ENCODE measurements at regions of chr7 and their contacts with region 1.

Region 1: GRCh38 chr7:100190048-100190711 is 12.5 kb downstream of the STAG3 start:
- DNase-seq: peak; percentile 19
- H3K4me3 ChIP-seq: no peak overlapping the region
- H3K27ac ChIP-seq: no peak overlapping the region
- H3K4me1 ChIP-seq: no peaks in the 10 kb centered on the region
- H3K27me3 ChIP-seq: no peaks in the 10 kb centered on the region
- CTCF ChIP-seq: peak; percentile 6 to 11

Region 2: DNA sequence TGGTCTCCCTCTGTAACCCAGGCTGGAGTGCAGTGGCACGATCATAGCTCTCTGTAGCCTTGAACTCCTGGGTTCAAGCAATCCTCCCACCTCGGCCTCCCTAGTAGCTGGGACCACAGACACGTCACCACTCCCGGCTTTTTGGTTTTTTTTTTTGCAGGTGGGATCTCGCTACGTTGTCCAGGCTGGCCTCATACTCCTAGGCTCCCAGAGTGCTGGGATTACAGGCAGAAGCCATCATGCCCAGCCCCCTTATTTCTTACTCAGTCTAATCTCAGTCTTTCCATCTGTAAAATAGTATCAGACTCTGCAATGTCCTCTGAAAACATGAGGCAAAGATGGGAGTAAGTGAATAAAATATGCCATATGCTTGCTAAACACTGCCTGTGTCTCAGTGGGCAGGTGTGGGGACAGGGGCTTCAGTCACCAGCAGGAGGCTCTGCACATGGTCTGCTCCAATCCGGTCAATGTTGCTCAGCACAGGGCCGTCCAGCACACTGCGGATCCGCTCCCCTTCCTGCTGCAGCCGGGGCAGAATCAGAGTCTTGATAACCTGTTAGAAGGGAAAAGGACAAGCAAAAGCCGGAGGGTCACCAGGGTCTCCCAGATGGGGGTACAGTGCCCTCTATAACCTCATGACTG is 80.5 kb before region 1 on chr7:
- CTCF ChIA-PET with region 1: no interaction called
- dilution Hi-C with region 1: loop called (anchors 5 kb)
- in situ Hi-C with region 1: no loop called
- intact Hi-C with region 1: no loop called
- DNase-seq: no peak
- H3K4me3 ChIP-seq: no peak overlapping the region
- H3K27ac ChIP-seq: no peak overlapping the region
- H3K4me1 ChIP-seq: no peaks in the 10 kb centered on the region
- H3K27me3 ChIP-seq: no peaks in the 10 kb centered on the region
- CTCF ChIP-seq: peak in 1 of 2 donors; percentile 2

Region 3: DNA sequence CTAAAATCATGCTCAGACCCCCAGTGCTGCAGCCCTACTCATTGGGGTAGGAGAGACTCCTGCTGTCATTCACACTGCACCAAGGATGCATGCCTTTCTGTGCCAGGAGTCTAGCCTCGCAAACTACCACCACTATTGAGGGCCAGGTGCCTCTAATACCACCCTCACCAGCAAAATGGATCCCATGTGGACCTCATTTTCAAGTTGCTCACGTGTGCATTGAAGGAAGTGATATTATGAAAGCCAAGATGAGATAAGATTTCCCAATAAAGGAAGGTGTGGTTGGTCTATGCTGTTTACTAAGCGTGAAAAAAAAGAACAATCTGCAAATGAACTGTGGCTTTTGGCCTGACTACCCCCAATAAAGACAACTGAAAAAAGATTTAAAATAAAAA is 48.6 kb before region 1 on chr7:
- CTCF ChIA-PET with region 1: no interaction called
- dilution Hi-C with region 1: loop called (anchors 5 kb)
- in situ Hi-C with region 1: no loop called
- intact Hi-C with region 1: no loop called
- DNase-seq: no peak
- H3K4me3 ChIP-seq: no peak overlapping the region
- H3K27ac ChIP-seq: no peak overlapping the region
- H3K4me1 ChIP-seq: no peaks in the 10 kb centered on the region
- H3K27me3 ChIP-seq: no peaks in the 10 kb centered on the region
- CTCF ChIP-seq: no peak

Region 4: DNA sequence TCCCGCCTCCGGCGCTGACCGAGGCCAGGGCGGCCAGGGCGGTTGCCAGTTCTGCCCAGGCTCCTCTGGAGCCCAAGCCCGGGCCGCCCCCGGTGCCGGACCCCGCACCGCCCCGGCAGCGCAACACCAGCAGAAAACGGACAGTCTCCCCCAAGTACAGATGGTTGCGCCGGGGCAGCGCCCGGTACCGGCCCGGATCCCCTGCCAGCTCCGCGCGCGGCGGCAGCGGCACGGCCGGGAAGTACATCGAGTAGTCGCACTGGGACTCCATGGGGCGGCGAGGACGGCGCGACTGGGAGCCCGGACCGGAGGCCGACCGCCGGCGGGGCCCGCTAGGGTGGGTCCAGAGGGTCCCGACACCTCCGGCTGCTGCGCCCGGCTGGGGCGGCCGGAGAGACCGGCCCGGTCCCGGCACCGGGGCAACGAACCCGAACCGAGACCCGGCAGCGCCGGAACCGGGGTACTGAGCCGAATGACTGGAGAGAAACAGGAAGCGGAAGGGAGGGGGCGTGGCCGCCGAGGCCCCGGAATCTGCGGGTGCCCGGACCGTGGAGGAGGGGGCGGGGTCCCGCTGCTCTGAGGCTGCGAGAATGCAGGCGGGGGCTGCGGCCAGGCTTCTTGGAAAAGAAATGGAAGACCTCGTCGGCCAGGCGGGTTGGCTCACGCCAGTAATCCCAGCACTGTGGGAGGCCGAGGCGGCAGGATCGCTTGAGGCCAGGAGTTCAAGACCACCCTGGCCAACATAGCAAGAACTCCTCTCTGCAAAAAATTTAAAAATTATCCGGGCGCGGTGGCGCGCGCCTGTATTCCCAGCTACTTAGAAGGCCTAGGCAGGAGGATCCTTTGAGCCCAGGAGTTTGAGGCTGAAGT is 31.7 kb before region 1 on chr7 and contains the start of gene TRAPPC14:
- CTCF ChIA-PET with region 1: interaction called, 10 read pairs
- dilution Hi-C with region 1: no loop called
- in situ Hi-C with region 1: no loop called
- intact Hi-C with region 1: loop called (anchors 2 kb)
- DNase-seq: peak; percentile 65
- H3K4me3 ChIP-seq: peak within 1 kb of the TSS; percentile 66 to 78 (median 73)
- H3K27ac ChIP-seq: peak within 1 kb of the TSS; percentile 54
- H3K4me1 ChIP-seq: peaks cover 19% of the 10 kb centered on the region
- H3K27me3 ChIP-seq: no peaks in the 10 kb centered on the region
- CTCF ChIP-seq: no peak
- total RNA-seq, gene TRAPPC14: 15.3 to 28.5 TPM

Region 5: DNA sequence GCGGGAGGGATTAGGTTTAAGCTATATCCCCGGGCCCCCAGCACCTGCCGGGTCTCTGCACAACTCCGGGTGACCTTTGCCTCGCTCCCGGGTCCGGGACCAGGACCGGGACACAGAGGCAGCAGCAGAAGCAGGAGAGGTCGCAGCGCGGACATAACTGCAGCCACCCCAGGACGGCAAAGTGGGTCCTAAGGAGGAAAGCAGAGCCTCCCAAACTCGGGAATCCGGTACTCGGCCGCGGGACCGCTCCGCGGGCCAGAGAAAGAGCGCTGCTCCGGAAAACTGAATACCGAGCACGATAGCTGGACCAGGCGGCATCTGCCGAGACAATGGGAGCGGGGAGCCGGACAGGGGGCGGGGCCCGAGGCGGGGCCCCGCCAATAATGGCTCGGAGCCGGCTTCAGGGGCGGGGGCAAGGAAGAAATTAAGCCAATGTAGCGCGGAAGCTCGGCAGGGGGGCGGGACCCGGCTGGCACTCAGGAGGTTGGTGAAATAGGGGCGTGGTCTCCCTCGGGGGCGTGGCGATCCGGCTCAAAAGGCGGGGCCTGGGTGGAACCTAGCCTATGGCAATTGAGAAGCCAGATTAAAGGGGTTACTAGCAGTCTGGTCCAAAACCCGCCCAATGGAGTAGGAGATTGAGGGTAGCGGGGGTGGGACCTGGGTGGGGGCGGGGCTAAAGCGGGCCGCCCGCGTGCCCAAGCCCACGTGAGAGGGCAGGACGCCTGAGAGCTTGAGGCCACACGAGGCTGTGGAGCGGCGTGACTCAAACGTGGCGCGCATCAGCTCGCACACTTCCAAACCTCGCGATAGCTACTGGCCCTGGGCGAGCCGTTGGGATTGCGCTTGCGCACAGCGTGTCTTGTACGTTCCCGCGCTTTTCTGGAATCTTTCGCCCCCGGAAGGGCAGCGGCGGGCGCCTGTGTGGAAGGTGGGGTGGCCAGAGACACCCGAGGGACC is 12.9 kb before region 1 on chr7 and contains the starts of genes GPC2 and STAG3:
- CTCF ChIA-PET with region 1: no interaction called
- dilution Hi-C with region 1: no loop called
- in situ Hi-C with region 1: no loop called
- intact Hi-C with region 1: no loop called
- DNase-seq: peak; percentile 95
- H3K4me3 ChIP-seq: peak within 1 kb of the TSS; percentile 54 to 68 (median 60)
- H3K27ac ChIP-seq: no peak within 1 kb of the TSS
- H3K4me1 ChIP-seq: no peaks in the 10 kb centered on the region
- H3K27me3 ChIP-seq: no peaks in the 10 kb centered on the region
- CTCF ChIP-seq: no peak
- total RNA-seq, gene GPC2: 4.0 to 6.4 TPM
- total RNA-seq, gene STAG3: 0.33 to 2.7 TPM

Region 6: DNA sequence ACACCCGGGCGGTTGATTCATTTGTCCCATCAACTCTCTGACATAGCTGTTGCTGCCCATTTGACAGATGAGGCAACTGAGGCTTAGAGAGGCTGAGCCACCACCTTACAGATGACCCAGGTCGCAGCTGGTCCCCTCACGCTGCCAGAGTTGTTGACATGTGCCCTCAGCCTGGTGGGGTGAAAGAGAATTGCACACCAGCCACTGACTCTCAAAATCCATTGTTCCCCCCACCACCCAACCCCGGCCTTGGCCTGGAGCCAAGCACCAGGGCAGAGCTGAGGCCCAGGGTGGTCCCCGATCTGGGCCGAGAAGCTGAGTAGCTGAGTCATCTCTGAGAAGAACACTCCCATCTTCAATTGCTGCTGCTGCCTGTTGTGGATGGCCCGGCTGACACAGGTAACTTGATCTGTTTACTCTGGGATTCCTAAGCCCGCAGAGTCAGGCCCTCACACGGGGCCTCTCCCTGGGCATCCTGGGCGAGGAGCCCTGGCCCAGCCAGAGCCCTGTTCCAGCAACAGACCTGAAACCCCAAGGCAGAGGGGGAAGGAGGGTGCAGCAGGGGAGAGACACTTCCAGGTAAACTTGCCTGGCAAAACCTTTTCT is 57.1 kb after region 1 on chr7:
- CTCF ChIA-PET with region 1: interaction called, 15 read pairs
- dilution Hi-C with region 1: no loop called
- in situ Hi-C with region 1: no loop called
- intact Hi-C with region 1: no loop called
- DNase-seq: peak; percentile 84
- H3K4me3 ChIP-seq: no peak overlapping the region
- H3K27ac ChIP-seq: no peak overlapping the region
- H3K4me1 ChIP-seq: peaks cover 13% of the 10 kb centered on the region
- H3K27me3 ChIP-seq: no peaks in the 10 kb centered on the region
- CTCF ChIP-seq: no peak

Measured in mammary epithelial cell (primary cell).